HEK293T (cell line): ENCODE measurements at regions of chr14 and their contacts with region 1.

Region 1: DNA sequence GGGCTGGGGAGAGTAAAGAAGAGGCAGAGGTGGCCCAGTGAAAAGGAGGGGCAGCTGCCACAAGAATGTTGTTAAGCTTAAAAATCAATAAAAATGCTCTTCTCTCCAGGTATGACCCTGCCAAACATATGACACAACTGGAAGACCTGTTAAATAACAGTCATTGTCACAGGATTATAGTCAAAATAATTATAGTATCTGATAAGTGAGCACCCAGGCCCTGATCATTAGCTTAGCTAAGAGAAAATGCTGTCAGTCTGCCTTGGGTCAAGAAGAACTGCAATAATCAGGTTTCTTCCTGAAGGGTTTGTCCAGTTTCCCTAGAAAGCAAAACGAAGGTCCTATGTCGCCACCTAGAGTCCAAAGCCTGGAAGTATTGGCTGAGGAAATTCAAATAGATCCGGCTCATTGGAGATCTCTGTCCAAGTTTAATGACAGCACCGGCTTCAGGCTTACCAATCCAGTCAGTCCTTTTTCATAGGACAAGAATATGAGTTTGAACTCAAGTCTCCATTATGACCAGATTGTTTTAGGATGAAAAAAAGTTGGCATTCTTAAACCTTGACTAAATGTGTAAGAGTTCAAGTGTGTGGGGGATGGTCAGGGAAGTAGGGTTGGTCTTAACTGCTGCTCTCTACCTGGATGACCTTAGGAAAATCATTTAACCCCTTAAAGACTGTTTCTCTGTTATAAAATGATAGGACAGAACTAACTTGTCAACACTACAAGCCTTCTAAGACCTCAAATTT is 22.5 kb upstream of the NKX2-8 start:
- DNase-seq: peak; percentile 77

Region 2: DNA sequence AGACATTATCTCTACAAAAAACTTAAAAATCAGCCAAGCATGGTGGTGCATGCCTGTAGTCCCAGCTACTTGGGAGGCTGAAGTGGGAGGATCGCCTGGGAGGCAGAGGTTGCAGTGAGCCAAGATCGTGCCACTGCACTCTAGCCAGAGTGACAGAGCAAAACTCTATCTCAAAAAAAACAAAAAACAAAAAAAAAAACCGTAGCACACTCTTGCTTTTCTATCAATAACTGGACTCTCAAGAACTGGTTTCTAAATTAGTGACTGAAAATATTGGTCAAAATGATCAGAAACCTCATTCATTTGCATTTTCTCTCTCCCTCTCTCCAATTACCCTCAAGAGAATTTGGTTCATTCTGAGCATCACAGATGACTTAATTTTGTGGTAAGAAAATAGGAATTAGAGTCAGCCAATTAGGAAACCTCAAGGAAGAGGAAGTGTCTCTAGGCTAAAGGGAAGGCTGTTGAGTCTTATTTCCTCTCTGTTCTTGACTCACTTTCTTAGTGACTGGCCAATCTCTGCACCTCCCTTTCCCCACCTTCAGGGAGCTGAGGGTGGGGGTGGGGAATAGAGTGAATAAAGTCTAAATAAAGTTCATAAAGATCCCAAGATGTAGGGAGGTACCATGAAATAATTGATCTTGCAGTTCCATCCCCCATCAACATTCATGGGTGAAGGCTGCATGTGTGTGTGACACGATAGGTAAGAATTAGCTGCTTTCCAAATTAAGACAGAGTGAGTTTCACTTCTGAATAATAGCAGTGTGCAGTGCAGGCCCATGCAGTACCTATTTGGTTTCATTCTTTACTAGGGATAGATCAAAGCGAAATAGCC is 1319.5 kb before region 1 on chr14:
- CTCF ChIA-PET with region 1: interaction called, 12 read pairs
- POLR2A ChIA-PET with region 1: no interaction called
- DNase-seq: no peak